PC-3 (cell line): ENCODE measurements at regions of chr1 and their contacts with region 1.

Region 1: DNA sequence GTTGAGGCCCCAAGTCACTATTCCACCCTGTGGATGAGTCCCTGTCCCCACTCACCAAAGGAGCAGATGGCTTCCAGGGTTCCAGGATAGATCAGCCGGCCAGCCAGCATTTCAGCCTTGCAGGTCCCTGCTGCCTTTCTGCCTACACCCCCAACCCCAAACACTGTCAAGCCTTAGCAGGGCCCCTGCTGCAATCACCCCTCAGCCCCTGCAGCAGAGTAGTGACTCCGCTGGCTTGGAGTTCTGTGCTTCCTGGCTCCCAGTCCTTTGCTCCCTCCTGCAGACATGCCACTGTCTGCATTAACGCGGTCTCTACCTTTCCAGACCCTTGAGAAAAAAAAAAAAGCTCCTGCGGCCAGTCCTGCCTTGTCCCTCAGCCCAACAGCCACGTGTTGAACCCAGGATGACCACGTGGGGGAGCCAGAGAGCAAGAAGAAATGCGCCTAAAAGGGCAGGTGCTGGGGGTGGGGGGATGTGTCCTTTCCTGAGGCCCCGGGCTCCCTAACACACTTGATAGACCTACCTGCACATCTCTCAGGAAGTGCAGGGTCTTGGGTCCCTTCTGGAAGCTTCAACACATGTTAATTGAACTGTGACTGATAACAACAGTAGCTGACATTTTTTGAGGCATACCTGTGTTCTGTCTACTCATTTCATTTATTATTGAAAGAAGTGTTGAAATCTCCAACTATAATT is 37.4 kb downstream of the RASSF5 start:
- DNase-seq: peak; percentile 93
- ATAC-seq: peak; percentile 76
- H3K4me3 ChIP-seq: no peak overlapping the region
- H3K27ac ChIP-seq: no peak overlapping the region
- H3K4me1 ChIP-seq: 0 out of 2 replicates have a peak, but pooled peaks cover 8% of the 10 kb centered on the region
- H3K27me3 ChIP-seq: no peaks in the 10 kb centered on the region
- CTCF ChIP-seq: peak; percentile 99

Region 2: DNA sequence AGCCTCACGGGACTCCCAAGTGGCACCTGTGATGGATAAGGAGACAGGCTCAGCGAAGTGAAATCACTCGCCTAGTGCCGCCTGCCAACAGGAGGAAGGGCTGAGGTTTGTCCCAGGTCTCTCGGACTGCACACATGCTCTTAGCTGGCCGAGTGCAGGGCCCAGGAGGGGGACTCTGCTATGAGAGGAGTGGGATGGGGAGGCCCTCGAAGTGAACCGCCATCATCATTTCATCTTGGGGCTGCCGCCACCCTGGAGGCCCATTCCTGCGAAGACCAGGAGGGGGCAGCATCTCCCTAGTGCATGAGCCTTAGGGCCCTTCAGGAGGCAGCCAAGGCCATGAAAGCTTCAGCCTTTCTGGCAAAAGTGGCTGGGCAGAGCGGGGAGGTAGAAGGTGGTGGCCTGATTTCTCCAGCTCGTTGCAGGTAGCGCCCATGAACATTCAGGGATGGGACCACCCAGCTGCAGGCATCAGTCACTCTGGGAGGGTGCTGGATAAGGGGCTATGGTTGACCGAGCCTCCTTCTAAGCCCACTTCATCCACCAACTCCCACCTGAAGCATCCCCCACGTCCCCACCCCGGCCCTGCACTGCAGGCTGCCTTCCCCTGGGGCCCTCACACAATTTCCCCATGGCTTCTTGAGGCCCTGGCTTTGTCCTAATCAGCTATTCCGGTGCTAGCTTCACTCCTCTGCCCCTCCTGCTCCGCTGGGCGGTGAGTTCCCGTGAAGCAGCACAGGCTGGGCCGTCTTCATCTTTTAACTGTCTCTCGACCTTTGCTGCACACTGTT is 54.5 kb before region 1 on chr1:
- CTCF ChIA-PET with region 1: interaction called, 11 read pairs
- POLR2A ChIA-PET with region 1: no interaction called
- intact Hi-C with region 1: loop called (anchors 2 kb)
- DNase-seq: peak; percentile 93
- ATAC-seq: peak; percentile 98
- H3K4me3 ChIP-seq: no peak overlapping the region
- H3K27ac ChIP-seq: no peak overlapping the region
- H3K4me1 ChIP-seq: no peaks in the 10 kb centered on the region
- H3K27me3 ChIP-seq: no peaks in the 10 kb centered on the region
- CTCF ChIP-seq: peak; percentile 100

Region 3: GRCh38 chr1:206507284-206508129 is 37.2 kb before region 1 on chr1 and contains the start of gene RASSF5:
- CTCF ChIA-PET with region 1: interaction called, 11 read pairs
- POLR2A ChIA-PET with region 1: no interaction called
- intact Hi-C with region 1: loop called (anchors 2 kb)
- DNase-seq: peak; percentile 90
- ATAC-seq: peak; percentile 71
- H3K4me3 ChIP-seq: peak within 1 kb of the TSS; percentile 69
- H3K27ac ChIP-seq: no peak within 1 kb of the TSS
- H3K4me1 ChIP-seq: peaks cover 50% of the 10 kb centered on the region
- H3K27me3 ChIP-seq: no peaks in the 10 kb centered on the region
- CTCF ChIP-seq: no peak
- total RNA-seq, gene RASSF5: 15.5 and 16.0 TPM in 2 replicates

Region 4: GRCh38 chr1:206532368-206532767 is 12.3 kb before region 1 on chr1:
- CTCF ChIA-PET with region 1: no interaction called
- POLR2A ChIA-PET with region 1: no interaction called
- intact Hi-C with region 1: no loop called
- DNase-seq: no peak
- ATAC-seq: no peak
- H3K4me3 ChIP-seq: no peak overlapping the region
- H3K27ac ChIP-seq: no peak overlapping the region
- H3K4me1 ChIP-seq: no peaks in the 10 kb centered on the region
- H3K27me3 ChIP-seq: no peaks in the 10 kb centered on the region
- CTCF ChIP-seq: no peak

Region 5: DNA sequence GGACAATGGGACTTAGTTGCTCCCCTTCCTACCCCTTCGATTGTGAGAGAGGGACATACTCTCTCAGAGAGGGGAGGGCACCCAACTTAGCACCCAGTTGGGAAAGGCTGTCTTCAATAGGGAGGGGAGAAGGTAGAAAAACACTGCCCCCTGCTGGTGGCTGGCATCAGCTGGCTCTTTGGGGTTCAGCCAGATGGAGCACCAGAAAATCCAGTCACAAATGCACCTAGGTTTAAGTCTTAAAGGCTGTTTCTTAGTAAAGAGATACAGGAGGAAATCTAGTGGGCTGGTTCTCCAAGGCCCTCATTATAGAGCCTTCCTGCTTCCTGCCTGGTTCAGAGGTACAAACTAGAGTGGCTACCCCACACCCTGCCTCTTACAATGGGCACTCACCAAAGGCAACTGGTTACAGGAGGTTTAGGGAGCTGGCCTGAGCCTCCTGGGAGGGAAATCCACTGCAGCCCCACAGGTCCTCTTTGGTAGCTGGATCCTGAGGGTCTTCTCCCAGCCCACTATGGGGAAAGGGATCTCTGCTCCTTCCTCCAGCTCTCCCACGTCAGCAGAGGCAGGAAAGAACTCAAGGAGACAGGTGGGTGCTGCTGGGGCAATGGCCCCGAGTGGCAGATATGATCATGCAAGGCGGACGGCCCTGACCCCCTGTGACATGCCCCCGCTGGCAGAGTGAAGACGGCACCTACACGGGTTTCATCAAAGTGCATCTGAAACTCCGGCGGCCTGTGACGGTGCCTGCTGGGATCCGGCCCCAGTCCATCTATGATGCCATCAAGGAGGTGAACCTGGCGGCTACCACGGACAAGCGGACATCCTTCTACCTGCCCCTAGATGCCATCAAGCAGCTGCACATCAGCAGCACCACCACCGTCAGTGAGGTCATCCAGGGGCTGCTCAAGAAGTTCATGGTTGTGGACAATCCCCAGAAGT is 39.3 kb after region 1 on chr1:
- CTCF ChIA-PET with region 1: interaction called, 10 read pairs
- POLR2A ChIA-PET with region 1: no interaction called
- intact Hi-C with region 1: loop called (anchors 1 kb)
- DNase-seq: peak; percentile 86
- ATAC-seq: peak; percentile 68
- H3K4me3 ChIP-seq: no peak overlapping the region
- H3K27ac ChIP-seq: no peak overlapping the region
- H3K4me1 ChIP-seq: peaks cover 52% of the 10 kb centered on the region
- H3K27me3 ChIP-seq: no peaks in the 10 kb centered on the region
- CTCF ChIP-seq: peak; percentile 100

Region 6: DNA sequence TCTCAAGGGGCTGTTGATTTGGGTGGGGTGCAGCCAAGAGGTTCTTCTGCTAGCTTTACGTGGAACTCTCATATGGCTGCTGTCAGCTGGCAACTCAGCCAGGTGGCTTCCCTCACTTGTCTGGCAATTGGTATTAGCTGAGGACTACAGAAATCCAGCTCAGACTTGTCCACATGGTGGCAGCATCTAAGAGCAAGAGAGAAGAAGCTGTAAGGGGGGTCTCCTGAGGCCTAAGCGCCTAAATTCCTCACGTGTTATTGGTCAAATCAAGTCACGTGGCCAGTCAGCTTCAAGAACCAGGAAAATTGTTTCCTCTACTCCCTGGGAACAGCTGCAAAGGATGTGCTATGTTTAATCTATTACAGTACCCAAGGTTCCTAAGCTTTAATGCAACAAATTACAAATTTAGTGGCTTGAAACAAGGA is 86.4 kb after region 1 on chr1:
- CTCF ChIA-PET with region 1: no interaction called
- POLR2A ChIA-PET with region 1: no interaction called
- intact Hi-C with region 1: no loop called
- DNase-seq: peak; percentile 94
- ATAC-seq: peak; percentile 23; the same call in 1 of the 2 replicates
- H3K4me3 ChIP-seq: no peak overlapping the region
- H3K27ac ChIP-seq: no peak overlapping the region
- H3K4me1 ChIP-seq: peaks cover 21% of the 10 kb centered on the region
- H3K27me3 ChIP-seq: no peaks in the 10 kb centered on the region
- CTCF ChIP-seq: peak; percentile 95